Tibial artery (tissue), 4 donors: ENCODE measurements at regions of chr1 and their contacts with region 1.

Region 1: GRCh38 chr1:236774926-236775325 is 20.2 kb upstream of the MTR start:
- DNase-seq: no peak
- H3K4me3 ChIP-seq: no peak overlapping the region
- H3K27ac ChIP-seq: no peak overlapping the region
- H3K4me1 ChIP-seq: no peaks in the 10 kb centered on the region
- H3K27me3 ChIP-seq: no peaks in the 10 kb centered on the region
- CTCF ChIP-seq: peak; percentile 30 to 34

Region 2: DNA sequence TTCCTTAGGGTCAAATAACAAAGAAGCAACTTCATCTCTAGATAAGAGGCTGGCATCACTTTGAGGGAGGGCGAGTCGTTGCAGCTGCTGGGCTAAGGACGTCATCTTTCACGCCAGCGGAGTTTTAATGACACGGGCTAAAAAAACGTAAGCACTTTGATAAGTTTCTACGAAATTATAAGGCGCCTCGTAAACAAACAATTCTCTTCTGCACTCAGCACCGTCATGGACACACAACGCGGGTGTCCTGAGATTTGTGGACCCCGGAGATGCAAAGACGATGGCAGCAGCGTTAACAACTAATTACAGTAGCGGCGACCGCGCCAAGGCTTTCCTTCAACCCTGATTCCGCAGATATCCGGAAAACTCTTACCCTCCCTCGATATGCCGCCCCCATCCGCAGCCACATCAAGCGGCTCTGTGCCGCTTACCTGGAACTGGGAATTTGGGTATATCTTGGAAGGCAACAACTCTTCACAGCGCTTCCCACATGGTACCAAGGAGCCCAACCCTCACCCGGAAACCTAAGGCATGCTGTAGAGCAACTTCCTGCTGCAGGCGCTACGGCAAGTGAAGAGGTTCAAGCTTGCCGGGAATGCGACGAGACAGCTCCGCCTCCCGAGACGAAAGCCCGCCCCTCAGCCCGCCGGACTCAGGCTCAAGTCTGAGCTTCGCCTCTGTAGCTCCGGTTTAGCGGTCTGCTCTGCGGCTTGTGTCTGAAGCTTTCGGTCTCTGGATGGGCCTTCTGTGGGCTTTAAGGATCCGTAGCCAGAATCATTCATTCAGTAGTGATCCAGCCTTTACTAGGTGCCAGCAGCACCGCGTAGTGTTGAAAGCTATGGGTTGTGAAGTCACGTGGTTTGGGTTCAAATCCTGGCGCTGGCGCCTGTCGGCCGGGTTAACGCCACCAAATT is 170.7 kb before region 1 on chr1 and contains the start of gene HEATR1:
- intact Hi-C with region 1: loop called (anchors 10 kb)
- DNase-seq: peak; percentile 91 to 96
- H3K4me3 ChIP-seq: peak within 1 kb of the TSS; percentile 73 to 84
- H3K27ac ChIP-seq: peak within 1 kb of the TSS; percentile 84 to 86
- H3K4me1 ChIP-seq: peaks cover 0 to 22% (median 3%) of the 10 kb centered on the region in 4 donors
- H3K27me3 ChIP-seq: no peaks in the 10 kb centered on the region
- CTCF ChIP-seq: no peak